HCT116 (cell line): ENCODE measurements at regions of chr1 and their contacts with region 1.

Region 1: GRCh38 chr1:62906428-62906886 is 122.5 kb downstream of the ATG4C start:
- DNase-seq: peak; percentile 21
- ATAC-seq: peak; percentile 93
- H3K4me3 ChIP-seq: no peak overlapping the region
- H3K27ac ChIP-seq: no peak overlapping the region
- H3K4me1 ChIP-seq: no peaks in the 10 kb centered on the region
- H3K27me3 ChIP-seq: no peaks in the 10 kb centered on the region
- CTCF ChIP-seq: peak; percentile 62 to 82 (median 78)
- POLR2A ChIP-seq: no peak
- RAD21 ChIP-seq: peak; percentile 27; the same call in 1 of the 2 replicates

Region 2: GRCh38 chr1:62882201-62883104 is 24.0 kb before region 1 on chr1:
- CTCF ChIA-PET with region 1: interaction called, 12 read pairs
- POLR2A ChIA-PET with region 1: no interaction called
- RAD21 ChIA-PET with region 1: no interaction called
- intact Hi-C with region 1: no loop called
- DNase-seq: no peak
- ATAC-seq: no peak
- H3K4me3 ChIP-seq: no peak overlapping the region
- H3K27ac ChIP-seq: no peak overlapping the region
- H3K4me1 ChIP-seq: no peaks in the 10 kb centered on the region
- H3K27me3 ChIP-seq: peaks cover 57% of the 10 kb centered on the region
- CTCF ChIP-seq: no peak
- POLR2A ChIP-seq: no peak
- RAD21 ChIP-seq: no peak